CD14-positive monocyte (primary cell): ENCODE measurements at regions of chr14 and their contacts with region 1.

Region 1: DNA sequence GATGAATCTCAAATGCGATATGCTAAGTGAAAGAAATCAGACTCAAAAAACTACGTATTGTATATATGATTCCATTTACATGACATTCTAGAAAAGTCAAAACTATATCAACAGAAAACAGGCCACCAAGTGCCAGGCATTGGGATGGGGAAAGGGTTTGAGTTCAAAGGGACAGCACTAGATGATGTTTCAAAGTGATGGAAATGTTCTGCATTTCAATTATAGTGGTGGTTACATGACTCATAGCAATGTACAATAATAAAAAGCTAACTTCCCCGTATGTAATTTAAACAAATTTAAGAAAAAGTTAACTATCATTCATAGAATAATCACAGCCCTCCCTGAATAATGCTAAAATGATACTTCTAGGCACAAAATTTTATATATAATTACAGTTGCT is 13.5 kb downstream of the HECTD1 start:
- DNase-seq: no peak
- H3K4me3 ChIP-seq: no peak overlapping the region
- H3K4me3 Mint-ChIP-seq: no peak overlapping the region
- H3K27ac ChIP-seq: no peak overlapping the region
- H3K27ac Mint-ChIP-seq: no peak overlapping the region
- H3K4me1 ChIP-seq: peaks cover 0 to 7% of the 10 kb centered on the region in 2 donors
- H3K4me1 Mint-ChIP-seq: peaks cover 28% of the 10 kb centered on the region
- H3K27me3 ChIP-seq: no peaks in the 10 kb centered on the region
- H3K27me3 Mint-ChIP-seq: no peaks in the 10 kb centered on the region
- CTCF ChIP-seq: no peak

Region 2: GRCh38 chr14:31172084-31172483 is 22.0 kb before region 1 on chr14:
- intact Hi-C with region 1: no loop called
- DNase-seq: no peak
- H3K4me3 ChIP-seq: no peak overlapping the region
- H3K4me3 Mint-ChIP-seq: no peak overlapping the region
- H3K27ac ChIP-seq: no peak overlapping the region
- H3K27ac Mint-ChIP-seq: peak overlapping the region in 1 of 7 donors; percentile 21
- H3K4me1 ChIP-seq: no peaks in the 10 kb centered on the region
- H3K4me1 Mint-ChIP-seq: no peaks in the 10 kb centered on the region
- H3K27me3 ChIP-seq: no peaks in the 10 kb centered on the region
- H3K27me3 Mint-ChIP-seq: no peaks in the 10 kb centered on the region
- CTCF ChIP-seq: no peak

Region 3: GRCh38 chr14:31286456-31287293 is 92.6 kb after region 1 on chr14:
- intact Hi-C with region 1: loop called in 1 of 2 experiments (anchors 10 kb)
- DNase-seq: no peak
- H3K4me3 ChIP-seq: no peak overlapping the region
- H3K4me3 Mint-ChIP-seq: no peak overlapping the region
- H3K27ac ChIP-seq: no peak overlapping the region
- H3K27ac Mint-ChIP-seq: no peak overlapping the region
- H3K4me1 ChIP-seq: peaks cover 24 to 30% of the 10 kb centered on the region in 2 donors
- H3K4me1 Mint-ChIP-seq: peaks cover 19% of the 10 kb centered on the region
- H3K27me3 ChIP-seq: no peaks in the 10 kb centered on the region
- H3K27me3 Mint-ChIP-seq: no peaks in the 10 kb centered on the region
- CTCF ChIP-seq: peak; percentile 64